ENCODE measurements at regions of chr19 and their contacts with region 1.

Region 1: GRCh38 chr19:42283143-42284065 is 14.4 kb downstream of the CIC start:
- DNase-seq: peak; percentile 95
- H3K4me3 ChIP-seq: peak overlapping the region in 2 of 3 experiments; percentile 3 to 35
- H3K27ac ChIP-seq: no peak overlapping the region
- H3K4me1 ChIP-seq: peaks cover 53% of the 10 kb centered on the region
- H3K27me3 ChIP-seq: no peaks in the 10 kb centered on the region
- CTCF ChIP-seq: no peak
- POLR2A ChIP-seq: no peak

Region 2: DNA sequence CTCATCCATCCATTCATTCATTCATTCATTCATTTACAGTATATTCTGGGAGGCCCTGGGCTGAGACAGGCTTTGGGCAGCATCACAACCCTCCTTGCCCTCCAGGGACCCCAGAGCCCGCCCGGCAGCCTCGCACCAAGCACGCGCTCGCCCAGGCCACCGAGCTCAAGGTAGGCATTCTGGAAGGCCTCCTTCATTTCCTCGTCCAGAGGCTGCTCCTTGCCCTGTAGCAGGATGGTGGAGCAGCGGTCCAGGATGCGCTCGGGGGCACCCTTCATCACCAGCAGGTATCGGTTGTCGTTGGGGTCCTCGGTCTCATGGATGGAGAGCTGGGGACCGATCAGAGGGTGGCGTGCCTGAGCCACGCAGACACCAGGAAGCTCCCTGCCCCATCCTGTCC is 304.9 kb before region 1 on chr19:
- CTCF ChIA-PET with region 1: no interaction called
- POLR2A ChIA-PET with region 1: no interaction called
- dilution Hi-C with region 1: no loop called
- intact Hi-C with region 1: no loop called
- DNase-seq: no peak
- H3K4me3 ChIP-seq: no peak overlapping the region
- H3K27ac ChIP-seq: no peak overlapping the region
- H3K4me1 ChIP-seq: no peaks in the 10 kb centered on the region
- H3K27me3 ChIP-seq: no peaks in the 10 kb centered on the region
- CTCF ChIP-seq: no peak
- POLR2A ChIP-seq: no peak

Region 3: GRCh38 chr19:42108527-42109389 is 174.6 kb before region 1 on chr19:
- CTCF ChIA-PET with region 1: interaction called, 4 read pairs
- POLR2A ChIA-PET with region 1: no interaction called
- dilution Hi-C with region 1: no loop called
- intact Hi-C with region 1: loop called (anchors 1 kb)
- DNase-seq: peak; percentile 90
- H3K4me3 ChIP-seq: no peak overlapping the region
- H3K27ac ChIP-seq: no peak overlapping the region
- H3K4me1 ChIP-seq: peaks cover 20% of the 10 kb centered on the region
- H3K27me3 ChIP-seq: peaks cover 3% of the 10 kb centered on the region in 2 experiments
- CTCF ChIP-seq: peak; percentile 99 to 100
- POLR2A ChIP-seq: no peak

Region 4: DNA sequence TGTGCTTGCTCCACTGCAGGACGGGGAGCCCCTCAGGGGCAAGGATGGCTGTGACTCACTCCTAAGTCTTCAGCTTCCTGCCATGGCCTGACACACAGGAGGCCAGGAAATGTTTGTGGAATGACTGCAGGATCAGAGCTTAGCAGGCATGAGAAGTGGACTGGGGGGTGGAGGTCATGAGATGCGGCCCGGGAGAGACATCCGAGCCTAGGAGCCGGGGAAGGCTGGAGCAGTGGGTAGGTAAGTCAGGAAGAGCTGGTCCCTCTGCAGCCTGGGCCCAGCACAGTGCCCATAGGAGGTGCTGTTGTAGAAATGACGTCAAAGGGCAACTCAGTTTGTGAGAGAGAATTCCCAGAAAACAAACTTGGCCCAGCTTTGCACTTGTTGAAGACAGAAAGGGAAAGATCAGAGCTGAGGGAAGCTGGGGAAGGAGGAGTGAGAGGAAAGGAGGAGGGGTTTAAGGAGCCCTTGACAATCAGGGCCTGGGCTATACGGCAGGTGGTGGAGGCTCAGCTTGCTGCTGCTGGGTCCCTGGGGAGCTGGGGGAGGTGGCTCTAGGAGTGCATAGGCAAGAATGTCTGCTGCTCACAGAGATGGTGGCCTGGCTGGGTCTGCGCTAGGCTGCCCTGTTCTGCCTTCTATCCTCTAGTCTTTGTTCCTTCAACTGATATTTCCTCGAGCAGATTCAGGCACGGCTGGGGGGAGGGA is 169.6 kb before region 1 on chr19:
- CTCF ChIA-PET with region 1: interaction called, 4 read pairs
- POLR2A ChIA-PET with region 1: no interaction called
- dilution Hi-C with region 1: no loop called
- intact Hi-C with region 1: loop called (anchors 1 kb)
- DNase-seq: peak; percentile 97
- H3K4me3 ChIP-seq: no peak overlapping the region
- H3K27ac ChIP-seq: peak overlapping the region; percentile 88
- H3K4me1 ChIP-seq: peaks cover 29% of the 10 kb centered on the region
- H3K27me3 ChIP-seq: no peaks in the 10 kb centered on the region
- CTCF ChIP-seq: peak; percentile 26 to 47
- POLR2A ChIP-seq: peak; percentile 42

Region 5: DNA sequence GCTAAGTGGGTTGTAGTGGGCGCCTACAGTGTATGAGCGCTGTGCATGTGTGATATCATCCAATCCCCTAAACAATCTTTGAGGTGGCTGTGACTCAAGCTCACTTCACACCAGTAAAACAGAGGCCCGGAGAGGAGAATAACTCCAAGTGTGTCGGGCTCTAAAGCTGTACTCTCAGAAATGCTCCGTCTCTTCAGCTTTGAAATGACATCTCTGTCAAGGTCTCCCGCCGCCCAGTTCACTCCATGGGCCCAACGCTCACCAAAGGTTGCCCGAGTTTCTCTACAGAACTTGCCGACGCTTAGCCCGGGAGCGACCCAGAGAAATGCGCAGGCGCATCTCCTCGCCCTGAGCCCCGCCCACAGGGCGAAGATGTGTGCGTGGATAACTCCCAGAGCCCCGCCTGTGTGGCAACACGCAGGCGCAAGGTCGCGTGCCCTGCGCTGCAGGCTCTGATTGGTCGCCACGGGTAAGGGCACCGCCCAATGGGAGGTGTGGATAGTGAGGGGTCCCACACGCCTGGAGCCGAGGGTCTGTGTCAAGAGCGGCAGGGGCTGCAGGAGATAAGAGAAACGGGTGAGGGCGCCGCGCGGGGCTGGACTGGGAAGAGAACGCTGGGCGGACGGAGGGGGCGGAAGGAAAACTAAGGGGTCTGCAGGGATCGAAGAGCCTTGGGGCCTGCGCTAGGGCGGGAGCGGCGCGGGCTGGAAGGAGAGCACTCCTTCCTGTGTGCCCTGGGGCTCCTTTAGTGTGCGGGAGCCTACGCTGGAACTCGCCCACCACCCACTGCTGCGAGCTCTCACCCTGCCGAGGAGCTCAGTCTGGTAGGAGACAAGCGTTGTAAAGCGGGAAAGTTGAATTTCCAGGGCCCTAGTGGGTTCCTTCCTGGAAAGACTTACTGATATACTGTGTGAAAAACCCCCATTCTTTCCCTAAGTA is 63.3 kb before region 1 on chr19 and contains the start of gene ZNF526:
- CTCF ChIA-PET with region 1: interaction called, 5 read pairs
- POLR2A ChIA-PET with region 1: no interaction called
- dilution Hi-C with region 1: no loop called
- intact Hi-C with region 1: loop called (anchors 2 kb)
- DNase-seq: peak; percentile 99
- H3K4me3 ChIP-seq: peak within 1 kb of the TSS; percentile 63 to 90 (median 83)
- H3K27ac ChIP-seq: peak within 1 kb of the TSS; percentile 54
- H3K4me1 ChIP-seq: peaks cover 24% of the 10 kb centered on the region
- H3K27me3 ChIP-seq: no peaks in the 10 kb centered on the region
- CTCF ChIP-seq: no peak
- POLR2A ChIP-seq: peak; percentile 74
- total RNA-seq, gene ZNF526: 13.3 and 13.4 TPM in 2 replicates

Region 6: GRCh38 chr19:42254989-42255765 is 28.2 kb before region 1 on chr19 and contains the start of gene ERF:
- CTCF ChIA-PET with region 1: interaction called, 365 read pairs
- POLR2A ChIA-PET with region 1: interaction called, 5 read pairs
- dilution Hi-C with region 1: no loop called
- intact Hi-C with region 1: loop called (anchors 1 kb)
- DNase-seq: peak; percentile 93
- H3K4me3 ChIP-seq: peak within 1 kb of the TSS; percentile 83 to 98 (median 94)
- H3K27ac ChIP-seq: peak within 1 kb of the TSS; percentile 79
- H3K4me1 ChIP-seq: peaks cover 30% of the 10 kb centered on the region
- H3K27me3 ChIP-seq: no peaks in the 10 kb centered on the region
- CTCF ChIP-seq: no peak
- POLR2A ChIP-seq: peak; percentile 86
- total RNA-seq, gene ERF: 117 and 130 TPM in 2 replicates

Region 7: GRCh38 chr19:42268704-42269477 is 14.5 kb before region 1 on chr19 and contains the start of gene CIC:
- CTCF ChIA-PET with region 1: interaction called, 24 read pairs
- POLR2A ChIA-PET with region 1: interaction called, 6 read pairs
- dilution Hi-C with region 1: no loop called
- intact Hi-C with region 1: loop called (anchors 1 kb)
- DNase-seq: peak; percentile 100
- H3K4me3 ChIP-seq: peak within 1 kb of the TSS; percentile 49 to 65 (median 64)
- H3K27ac ChIP-seq: peak within 1 kb of the TSS; percentile 91
- H3K4me1 ChIP-seq: peaks cover 22% of the 10 kb centered on the region
- H3K27me3 ChIP-seq: no peaks in the 10 kb centered on the region
- CTCF ChIP-seq: no peak
- POLR2A ChIP-seq: no peak
- total RNA-seq, gene CIC: 86.0 and 86.3 TPM in 2 replicates

Region 8: GRCh38 chr19:42301656-42302203 is 18.3 kb after region 1 on chr19 and contains the start of gene PRR19:
- CTCF ChIA-PET with region 1: interaction called, 4 read pairs
- POLR2A ChIA-PET with region 1: interaction called, 3 read pairs
- dilution Hi-C with region 1: no loop called
- intact Hi-C with region 1: loop called (anchors 1 kb)
- DNase-seq: no peak
- H3K4me3 ChIP-seq: peak within 1 kb of the TSS; percentile 44 to 70 (median 54)
- H3K27ac ChIP-seq: no peak within 1 kb of the TSS
- H3K4me1 ChIP-seq: peaks cover 9% of the 10 kb centered on the region
- H3K27me3 ChIP-seq: no peaks in the 10 kb centered on the region
- CTCF ChIP-seq: no peak
- POLR2A ChIP-seq: no peak
- total RNA-seq, gene PRR19: 1.0 and 1.5 TPM in 2 replicates